B cell (primary cell): ENCODE measurements at regions of chr1 and their contacts with region 1.

Region 1: GRCh38 chr1:39491146-39491921 is at the start of gene BMP8A:
- DNase-seq: peak; percentile 90
- ATAC-seq: peak; percentile 94
- H3K4me3 ChIP-seq: peak within 1 kb of the TSS in 4 of 5 experiments; percentile 31 to 60 (median 56)
- H3K4me3 Mint-ChIP-seq: peak within 1 kb of the TSS; percentile 81
- H3K27ac ChIP-seq: no peak within 1 kb of the TSS
- H3K27ac Mint-ChIP-seq: peak within 1 kb of the TSS; percentile 20
- H3K4me1 ChIP-seq: peaks cover 3 to 8% of the 10 kb centered on the region in 2 donors
- H3K4me1 Mint-ChIP-seq: peaks cover 9% of the 10 kb centered on the region
- H3K27me3 ChIP-seq: peaks cover 0 to 19% (median 9%) of the 10 kb centered on the region in 4 experiments
- H3K27me3 Mint-ChIP-seq: peaks cover 13% of the 10 kb centered on the region
- CTCF ChIP-seq: no peak
- total RNA-seq, gene BMP8A: 0.25 and 0.85 TPM in 2 replicates

Region 2: GRCh38 chr1:38046884-38047602 is 1444.3 kb before region 1 on chr1:
- CTCF ChIA-PET with region 1: no interaction called
- POLR2A ChIA-PET with region 1: no interaction called
- intact Hi-C with region 1: loop called (anchors 5 kb)
- DNase-seq: peak; percentile 86
- ATAC-seq: peak; percentile 89
- H3K4me3 ChIP-seq: peak overlapping the region in 4 of 5 experiments; percentile 43 to 68 (median 60)
- H3K4me3 Mint-ChIP-seq: peak overlapping the region; percentile 90
- H3K27ac ChIP-seq: no peak overlapping the region
- H3K27ac Mint-ChIP-seq: peak overlapping the region; percentile 53
- H3K4me1 ChIP-seq: peaks cover 24% of the 10 kb centered on the region in 2 donors
- H3K4me1 Mint-ChIP-seq: peaks cover 22% of the 10 kb centered on the region
- H3K27me3 ChIP-seq: peaks cover 0 to 44% (median 30%) of the 10 kb centered on the region in 4 experiments
- H3K27me3 Mint-ChIP-seq: peaks cover 24% of the 10 kb centered on the region
- CTCF ChIP-seq: no peak

Region 3: DNA sequence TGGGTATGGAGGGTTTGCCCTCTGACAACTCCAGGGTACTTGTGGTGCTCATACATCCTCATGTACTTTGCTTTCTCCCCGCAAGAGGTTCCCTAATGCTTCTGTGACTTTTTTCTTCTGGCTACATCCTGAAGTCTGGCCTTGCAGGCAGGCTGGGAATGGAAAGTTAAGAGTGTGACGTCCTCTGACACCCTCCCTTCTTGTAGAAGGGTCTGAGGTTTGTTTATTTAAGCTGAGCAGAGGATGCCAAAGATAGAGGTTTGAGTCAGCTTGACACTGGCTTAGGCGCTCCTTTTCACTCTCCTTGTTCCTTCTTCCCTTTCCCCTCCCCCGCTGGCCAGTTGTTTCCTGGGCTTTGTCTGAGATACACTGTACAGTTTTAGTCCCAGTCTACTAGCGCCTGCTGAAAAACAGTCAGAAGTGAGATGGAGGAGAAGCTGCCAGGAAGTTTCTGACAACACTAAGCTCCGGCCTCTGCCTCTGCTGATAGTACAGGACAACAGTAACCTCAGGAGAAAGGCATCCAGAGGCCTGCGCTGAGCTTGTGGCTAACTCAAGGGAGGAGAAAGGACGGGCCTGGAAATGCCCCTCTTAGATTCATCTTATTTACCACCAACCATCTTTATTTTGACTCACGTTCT is 286.8 kb before region 1 on chr1 and contains the start of gene MACF1:
- CTCF ChIA-PET with region 1: no interaction called
- POLR2A ChIA-PET with region 1: no interaction called
- intact Hi-C with region 1: no loop called
- DNase-seq: peak; percentile 29
- ATAC-seq: peak; percentile 17
- H3K4me3 ChIP-seq: peak within 1 kb of the TSS in 4 of 5 experiments; percentile 7 to 41 (median 22)
- H3K4me3 Mint-ChIP-seq: peak within 1 kb of the TSS; percentile 80
- H3K27ac ChIP-seq: peak within 1 kb of the TSS; percentile 17 to 33
- H3K27ac Mint-ChIP-seq: peak within 1 kb of the TSS; percentile 80
- H3K4me1 ChIP-seq: peaks cover 21 to 22% of the 10 kb centered on the region in 2 donors
- H3K4me1 Mint-ChIP-seq: peaks cover 25% of the 10 kb centered on the region
- H3K27me3 ChIP-seq: no peaks in the 10 kb centered on the region
- H3K27me3 Mint-ChIP-seq: no peaks in the 10 kb centered on the region
- CTCF ChIP-seq: no peak
- total RNA-seq, gene MACF1: 155 and 159 TPM in 2 replicates

Region 4: GRCh38 chr1:39525366-39526165 is 34.2 kb after region 1 on chr1:
- CTCF ChIA-PET with region 1: no interaction called
- POLR2A ChIA-PET with region 1: no interaction called
- intact Hi-C with region 1: loop called (anchors 5 kb)
- DNase-seq: peak; percentile 79
- ATAC-seq: peak; percentile 99
- H3K4me3 ChIP-seq: no peak overlapping the region
- H3K4me3 Mint-ChIP-seq: peak overlapping the region; percentile 70
- H3K27ac ChIP-seq: peak overlapping the region; percentile 50 to 55
- H3K27ac Mint-ChIP-seq: peak overlapping the region; percentile 84
- H3K4me1 ChIP-seq: peaks cover 30 to 43% of the 10 kb centered on the region in 2 donors
- H3K4me1 Mint-ChIP-seq: peaks cover 23% of the 10 kb centered on the region
- H3K27me3 ChIP-seq: no peaks in the 10 kb centered on the region
- H3K27me3 Mint-ChIP-seq: no peaks in the 10 kb centered on the region
- CTCF ChIP-seq: no peak